HepG2 (cell line): ENCODE measurements at regions of chr6 and their contacts with region 1.

Region 1: GRCh38 chr6:141026504-141026903 is 1106.2 kb upstream of the GJE1 start:
- DNase-seq: peak; percentile 81
- ATAC-seq: peak; percentile 93
- H3K4me3 ChIP-seq: no peak overlapping the region
- H3K27ac ChIP-seq: no peak overlapping the region
- H3K4me1 ChIP-seq: peaks cover 17% of the 10 kb centered on the region
- H3K27me3 ChIP-seq: no peaks in the 10 kb centered on the region
- CTCF ChIP-seq: no peak
- EP300 ChIP-seq: no peak
- POLR2A ChIP-seq: no peak
- RAD21 ChIP-seq: no peak

Region 2: DNA sequence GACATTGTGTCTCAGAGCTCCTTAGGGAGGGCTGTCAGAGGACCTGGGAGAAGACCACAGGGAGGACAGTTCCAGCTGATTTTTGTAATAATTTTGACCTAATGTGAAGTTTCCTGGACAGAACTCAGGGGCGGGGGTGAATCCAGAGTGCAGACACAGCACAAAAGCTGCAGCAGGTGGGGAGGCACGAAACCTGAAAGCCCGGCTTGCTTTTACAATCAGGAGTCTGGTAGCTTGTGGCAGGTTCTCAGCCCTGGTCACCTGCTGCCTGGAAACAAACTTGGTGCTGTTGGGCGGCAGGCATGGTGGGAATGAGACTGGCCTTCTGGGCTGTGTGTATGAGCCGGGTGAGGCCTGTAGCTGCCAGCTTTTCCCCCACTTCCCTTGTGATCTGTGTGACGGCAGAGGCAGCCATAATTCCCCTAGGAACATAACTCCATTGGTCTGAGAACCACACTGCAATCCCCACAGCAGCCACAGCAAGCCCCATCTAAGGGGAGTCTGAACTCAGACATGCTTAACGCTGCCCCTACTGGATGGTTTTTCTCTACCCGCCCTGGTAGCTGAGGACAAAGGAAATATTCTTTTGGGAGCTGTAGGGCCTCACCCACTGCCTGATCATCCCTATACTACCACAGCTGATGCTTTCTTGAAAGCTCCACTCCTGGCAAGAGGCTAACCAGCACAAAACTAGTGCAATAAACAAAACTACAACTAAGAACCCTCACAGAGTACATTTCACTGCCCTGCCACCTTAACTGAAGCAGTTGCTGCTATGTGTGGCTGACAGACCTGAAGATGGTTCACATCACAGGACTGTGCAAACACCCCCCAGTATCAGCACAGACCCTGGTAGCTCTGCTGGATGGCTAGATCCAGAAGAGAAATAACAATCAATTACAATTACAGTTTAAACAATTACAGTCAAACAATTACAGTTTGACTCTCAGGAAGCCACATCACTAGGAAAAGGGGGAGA is 51.1 kb after region 1 on chr6:
- CTCF ChIA-PET with region 1: no interaction called
- POLR2A ChIA-PET with region 1: no interaction called
- in situ Hi-C with region 1: no loop called
- intact Hi-C with region 1: loop called (anchors 2 kb)
- DNase-seq: peak; percentile 80
- ATAC-seq: peak; percentile 100
- H3K4me3 ChIP-seq: peak overlapping the region; percentile 27 to 60 (median 46); a peak in 5 of 6 replicates
- H3K27ac ChIP-seq: no peak overlapping the region
- H3K4me1 ChIP-seq: peaks cover 9% of the 10 kb centered on the region; the same call in 1 of the 2 replicates
- H3K27me3 ChIP-seq: no peaks in the 10 kb centered on the region
- CTCF ChIP-seq: peak; percentile 58
- EP300 ChIP-seq: no peak
- POLR2A ChIP-seq: no peak
- RAD21 ChIP-seq: peak; percentile 57; the same call in 1 of the 2 replicates